Activated CD4-positive, alpha-beta T cell treated with anti-CD3 and anti-CD28 coated beads, Interleukin-2, amount 10 ng/mL, durations not matched to agents 7 days and 5 days (primary cell): ENCODE measurements at regions of chr3 and their contacts with region 1.

Region 1: GRCh38 chr3:5112043-5112442 is 10.0 kb upstream of the ARL8B start:
- DNase-seq: no peak
- H3K4me3 Mint-ChIP-seq: no peak overlapping the region
- H3K27ac Mint-ChIP-seq: no peak overlapping the region
- H3K4me1 Mint-ChIP-seq: no peaks in the 10 kb centered on the region
- H3K27me3 Mint-ChIP-seq: no peaks in the 10 kb centered on the region

Region 2: DNA sequence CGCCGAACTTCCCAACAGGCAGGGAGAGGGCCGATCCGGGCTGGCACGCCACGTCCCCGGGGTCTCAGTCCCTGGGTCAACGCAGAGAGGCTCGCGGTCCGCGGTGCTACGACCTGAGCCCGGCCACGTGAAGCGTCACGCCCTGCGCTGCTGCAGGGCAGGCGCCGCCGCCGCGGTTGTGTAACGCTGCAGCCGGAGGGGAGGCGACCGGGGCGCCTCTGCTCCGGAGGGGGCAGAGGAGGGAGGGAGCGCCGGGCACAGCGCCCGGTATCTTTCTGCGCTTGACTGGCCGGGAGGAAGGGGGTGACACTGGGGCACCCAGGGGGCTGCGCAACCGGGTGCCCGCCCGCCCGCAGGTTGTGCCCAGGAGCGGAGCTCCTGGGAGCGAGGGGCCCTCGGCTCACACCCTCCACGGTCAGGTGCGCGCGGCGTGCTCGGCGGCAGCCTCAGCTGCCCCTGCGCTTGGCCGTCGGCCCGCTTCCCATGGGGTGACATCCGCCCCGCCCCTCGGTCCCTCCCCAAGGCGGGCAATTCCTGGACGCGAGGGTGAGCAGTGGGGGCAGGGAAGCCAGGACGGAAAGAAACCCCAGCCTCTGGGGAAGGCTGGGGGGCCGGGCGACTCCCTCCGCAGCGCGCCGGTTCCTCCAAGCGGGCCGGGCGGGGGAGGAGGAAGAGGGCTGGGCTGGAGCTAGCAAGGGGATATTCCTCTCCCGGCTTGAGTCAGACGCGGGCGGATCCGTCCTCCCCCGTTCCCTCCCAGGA is 133.7 kb before region 1 on chr3:
- CTCF ChIA-PET with region 1: no interaction called
- POLR2A ChIA-PET with region 1: no interaction called
- DNase-seq: peak; percentile 83
- H3K4me3 Mint-ChIP-seq: peak overlapping the region; percentile 99
- H3K27ac Mint-ChIP-seq: peak overlapping the region; percentile 98
- H3K4me1 Mint-ChIP-seq: peaks cover 49% of the 10 kb centered on the region
- H3K27me3 Mint-ChIP-seq: no peaks in the 10 kb centered on the region

Region 3: GRCh38 chr3:5122030-5122740 is 10.1 kb after region 1 on chr3 and contains the start of gene ARL8B:
- CTCF ChIA-PET with region 1: interaction called, 12 read pairs
- POLR2A ChIA-PET with region 1: no interaction called
- DNase-seq: peak; percentile 91
- H3K4me3 Mint-ChIP-seq: peak within 1 kb of the TSS; percentile 91
- H3K27ac Mint-ChIP-seq: peak within 1 kb of the TSS; percentile 96
- H3K4me1 Mint-ChIP-seq: peaks cover 29% of the 10 kb centered on the region
- H3K27me3 Mint-ChIP-seq: no peaks in the 10 kb centered on the region
- total RNA-seq, gene ARL8B: 41.3 to 46.4 TPM